ENCODE measurements at regions of chr19 and their contacts with region 1.

Region 1: DNA sequence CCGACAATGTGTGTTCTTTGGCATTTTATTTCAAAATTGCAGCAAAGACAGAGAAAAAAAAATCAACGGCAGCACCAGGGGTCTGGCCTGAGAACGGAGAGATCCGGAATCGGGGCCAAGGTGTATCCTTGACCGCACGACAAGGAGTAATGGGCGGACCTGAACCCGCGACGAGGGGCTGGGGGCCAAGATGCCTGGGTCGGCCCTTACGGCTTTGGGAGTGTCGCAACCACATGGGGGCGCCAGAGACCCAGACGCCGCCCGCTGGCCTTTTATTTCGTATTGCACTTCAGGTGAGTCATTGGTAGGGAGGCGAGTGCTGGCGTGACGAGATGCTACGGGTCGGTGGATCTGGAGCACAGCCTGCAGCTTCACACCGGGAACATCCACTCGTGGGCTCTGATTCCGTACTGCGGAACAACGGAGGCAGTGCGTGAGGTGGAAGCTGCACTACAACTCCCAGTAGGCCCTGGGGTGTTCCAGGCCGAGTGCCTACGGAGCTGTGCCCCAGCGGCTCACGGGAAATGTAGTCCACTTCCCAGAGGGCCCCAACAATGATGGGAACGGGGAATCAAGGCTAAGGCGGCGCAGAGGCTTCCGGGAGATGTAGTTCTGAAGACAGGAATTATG is 15.7 kb downstream of the BCAT2 start:
- DNase-seq: peak; percentile 93
- ATAC-seq: peak; percentile 98
- H3K4me3 ChIP-seq: peak overlapping the region; percentile 42 to 68 (median 60)
- H3K4me3 Mint-ChIP-seq: peak overlapping the region; percentile 98
- H3K27ac ChIP-seq: peak overlapping the region; percentile 30 to 62
- H3K27ac Mint-ChIP-seq: peak overlapping the region; percentile 93
- H3K4me1 ChIP-seq: peaks cover 3 to 10% of the 10 kb centered on the region in 2 donors
- H3K4me1 Mint-ChIP-seq: peaks cover 11% of the 10 kb centered on the region
- H3K27me3 ChIP-seq: no peaks in the 10 kb centered on the region
- H3K27me3 Mint-ChIP-seq: no peaks in the 10 kb centered on the region
- CTCF ChIP-seq: peak; percentile 96

Region 2: DNA sequence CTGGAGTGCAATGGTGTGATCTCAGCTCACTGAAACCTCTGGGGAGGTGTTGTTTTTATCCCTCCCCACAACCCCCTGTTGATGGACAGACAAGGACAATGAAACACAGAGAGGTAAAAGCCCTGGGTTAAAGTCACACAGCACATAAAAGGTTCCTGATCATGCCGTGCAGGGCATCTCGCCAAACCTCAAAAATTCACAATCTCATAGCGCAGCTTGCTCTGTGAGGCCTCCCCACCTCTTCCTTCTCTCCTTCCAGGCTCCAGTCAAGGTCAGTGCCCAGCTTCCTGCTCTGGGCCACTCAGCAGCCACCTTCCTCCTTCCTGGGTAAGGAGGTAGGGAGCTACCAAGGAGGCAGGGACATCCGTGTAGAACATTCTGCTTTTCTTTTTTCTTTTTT is 97.1 kb before region 1 on chr19:
- CTCF ChIA-PET with region 1: no interaction called
- POLR2A ChIA-PET with region 1: no interaction called
- intact Hi-C with region 1: no loop called
- DNase-seq: no peak
- ATAC-seq: no peak
- H3K4me3 ChIP-seq: no peak overlapping the region
- H3K4me3 Mint-ChIP-seq: no peak overlapping the region
- H3K27ac ChIP-seq: no peak overlapping the region
- H3K27ac Mint-ChIP-seq: no peak overlapping the region
- H3K4me1 ChIP-seq: peaks cover 9 to 11% of the 10 kb centered on the region in 2 donors
- H3K4me1 Mint-ChIP-seq: peaks cover 10% of the 10 kb centered on the region
- H3K27me3 ChIP-seq: peaks cover 0 to 26% (median 5%) of the 10 kb centered on the region in 4 experiments
- H3K27me3 Mint-ChIP-seq: peaks cover 14% of the 10 kb centered on the region
- CTCF ChIP-seq: no peak

Region 3: DNA sequence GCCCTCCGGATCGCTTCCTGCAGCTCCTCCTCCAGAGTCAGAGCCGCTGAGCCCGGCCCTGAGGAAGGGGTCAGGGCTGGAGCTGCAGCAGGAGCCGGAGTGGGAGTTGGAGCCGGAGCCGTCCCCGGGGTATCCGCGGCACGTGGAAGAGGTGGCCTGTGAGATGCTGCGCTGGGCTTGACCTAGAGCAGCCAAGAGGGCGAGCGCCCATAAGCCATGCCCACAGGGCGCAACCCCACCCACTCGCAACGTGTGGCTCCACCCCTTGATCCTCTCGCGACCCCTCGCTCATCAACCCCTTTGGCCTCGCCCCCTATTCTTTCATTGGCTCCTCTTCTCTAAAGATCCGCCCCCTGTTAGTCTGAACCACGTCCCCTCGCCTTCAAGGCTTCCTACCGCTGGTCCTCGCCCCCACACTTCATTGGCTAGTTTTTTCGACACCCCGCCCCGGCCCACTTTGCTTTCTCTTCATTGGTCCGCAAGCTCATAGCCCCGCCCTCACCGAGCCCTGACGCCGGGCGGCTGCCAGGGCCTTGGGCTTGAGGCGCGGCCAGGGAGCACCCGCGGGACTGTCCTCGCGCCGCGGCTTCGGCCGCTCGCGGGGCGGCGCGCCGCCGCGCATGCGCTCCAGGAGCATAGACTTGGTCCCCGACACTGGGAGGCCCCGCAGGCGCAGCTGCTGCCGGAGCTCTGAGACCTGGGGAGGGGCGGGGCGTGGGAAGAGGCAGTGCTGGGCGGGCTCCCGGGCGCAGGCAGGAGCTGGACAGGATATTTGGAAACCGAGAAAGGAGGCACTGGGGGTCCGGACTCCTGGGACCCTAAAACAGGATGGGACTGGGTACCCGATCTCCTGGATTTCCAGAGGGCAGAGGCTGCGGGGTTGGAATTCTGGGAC is 81.1 kb before region 1 on chr19:
- CTCF ChIA-PET with region 1: no interaction called
- POLR2A ChIA-PET with region 1: no interaction called
- intact Hi-C with region 1: loop called (anchors 1 kb)
- DNase-seq: peak; percentile 99
- ATAC-seq: peak; percentile 90
- H3K4me3 ChIP-seq: peak overlapping the region; percentile 39 to 86 (median 74)
- H3K4me3 Mint-ChIP-seq: peak overlapping the region; percentile 89
- H3K27ac ChIP-seq: peak overlapping the region; percentile 67 to 76
- H3K27ac Mint-ChIP-seq: peak overlapping the region; percentile 82
- H3K4me1 ChIP-seq: peaks cover 14 to 22% of the 10 kb centered on the region in 2 donors
- H3K4me1 Mint-ChIP-seq: peaks cover 21% of the 10 kb centered on the region
- H3K27me3 ChIP-seq: no peaks in the 10 kb centered on the region
- H3K27me3 Mint-ChIP-seq: no peaks in the 10 kb centered on the region
- CTCF ChIP-seq: no peak

Region 4: GRCh38 chr19:48746738-48747575 is 48.2 kb before region 1 on chr19 and contains the start of gene IZUMO1:
- CTCF ChIA-PET with region 1: no interaction called
- POLR2A ChIA-PET with region 1: no interaction called
- intact Hi-C with region 1: loop called (anchors 1 kb)
- DNase-seq: peak; percentile 64
- ATAC-seq: peak; percentile 72
- H3K4me3 ChIP-seq: peak within 1 kb of the TSS in 2 of 5 experiments; percentile 19 to 20
- H3K4me3 Mint-ChIP-seq: no peak within 1 kb of the TSS
- H3K27ac ChIP-seq: no peak within 1 kb of the TSS
- H3K27ac Mint-ChIP-seq: peak within 1 kb of the TSS; percentile 10
- H3K4me1 ChIP-seq: peaks cover 11 to 14% of the 10 kb centered on the region in 2 donors
- H3K4me1 Mint-ChIP-seq: peaks cover 14% of the 10 kb centered on the region
- H3K27me3 ChIP-seq: peaks cover 0 to 57% (median 19%) of the 10 kb centered on the region in 4 experiments
- H3K27me3 Mint-ChIP-seq: peaks cover 33% of the 10 kb centered on the region
- CTCF ChIP-seq: no peak
- total RNA-seq, gene IZUMO1: not detected in 2 replicates

Region 5: GRCh38 chr19:48770260-48770659 is 24.9 kb before region 1 on chr19:
- CTCF ChIA-PET with region 1: no interaction called
- POLR2A ChIA-PET with region 1: no interaction called
- intact Hi-C with region 1: no loop called
- DNase-seq: no peak
- ATAC-seq: no peak
- H3K4me3 ChIP-seq: no peak overlapping the region
- H3K4me3 Mint-ChIP-seq: no peak overlapping the region
- H3K27ac ChIP-seq: no peak overlapping the region
- H3K27ac Mint-ChIP-seq: no peak overlapping the region
- H3K4me1 ChIP-seq: no peaks in the 10 kb centered on the region
- H3K4me1 Mint-ChIP-seq: no peaks in the 10 kb centered on the region
- H3K27me3 ChIP-seq: peaks cover 0 to 5% (median 0%) of the 10 kb centered on the region in 4 experiments
- H3K27me3 Mint-ChIP-seq: peaks cover 25% of the 10 kb centered on the region
- CTCF ChIP-seq: no peak

Region 6: GRCh38 chr19:48780631-48781391 is 14.4 kb before region 1 on chr19:
- CTCF ChIA-PET with region 1: interaction called, 17 read pairs
- POLR2A ChIA-PET with region 1: interaction called, 8 read pairs
- intact Hi-C with region 1: no loop called
- DNase-seq: no peak
- ATAC-seq: no peak
- H3K4me3 ChIP-seq: no peak overlapping the region
- H3K4me3 Mint-ChIP-seq: no peak overlapping the region
- H3K27ac ChIP-seq: no peak overlapping the region
- H3K27ac Mint-ChIP-seq: peak overlapping the region; percentile 5
- H3K4me1 ChIP-seq: peaks cover 3 to 15% of the 10 kb centered on the region in 2 donors
- H3K4me1 Mint-ChIP-seq: peaks cover 19% of the 10 kb centered on the region
- H3K27me3 ChIP-seq: no peaks in the 10 kb centered on the region
- H3K27me3 Mint-ChIP-seq: no peaks in the 10 kb centered on the region
- CTCF ChIP-seq: no peak

Region 7: GRCh38 chr19:48812094-48812929 is 17.1 kb after region 1 on chr19:
- CTCF ChIA-PET with region 1: interaction called, 85 read pairs
- POLR2A ChIA-PET with region 1: interaction called, 9 read pairs
- intact Hi-C with region 1: loop called (anchors 1 kb)
- DNase-seq: peak; percentile 81
- ATAC-seq: peak; percentile 83
- H3K4me3 ChIP-seq: peak overlapping the region in 4 of 5 experiments; percentile 62 to 88 (median 74)
- H3K4me3 Mint-ChIP-seq: peak overlapping the region; percentile 93
- H3K27ac ChIP-seq: peak overlapping the region; percentile 16 to 22
- H3K27ac Mint-ChIP-seq: peak overlapping the region; percentile 97
- H3K4me1 ChIP-seq: peaks cover 7 to 26% of the 10 kb centered on the region in 2 donors
- H3K4me1 Mint-ChIP-seq: peaks cover 34% of the 10 kb centered on the region
- H3K27me3 ChIP-seq: no peaks in the 10 kb centered on the region
- H3K27me3 Mint-ChIP-seq: no peaks in the 10 kb centered on the region
- CTCF ChIP-seq: no peak

Region 8: DNA sequence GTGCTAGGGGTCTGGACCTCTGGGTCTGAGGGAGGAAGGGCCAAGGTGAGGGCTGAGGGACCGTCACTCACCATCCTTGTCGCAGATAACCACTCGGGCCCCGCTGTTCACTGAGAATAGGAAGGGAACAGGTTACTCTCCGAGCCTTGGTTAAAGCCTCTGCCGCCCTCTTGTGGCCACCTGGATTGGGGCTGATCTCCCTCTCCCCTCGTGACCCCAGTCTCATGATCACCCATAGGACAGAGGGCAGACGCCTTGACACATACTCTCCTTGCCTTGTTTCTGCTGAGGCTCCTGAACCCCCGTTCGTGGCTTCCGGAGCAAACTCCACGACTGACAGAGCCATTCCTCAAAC is 40.5 kb after region 1 on chr19:
- CTCF ChIA-PET with region 1: interaction called, 553 read pairs
- POLR2A ChIA-PET with region 1: interaction called, 8 read pairs
- intact Hi-C with region 1: loop called (anchors 1 kb)
- DNase-seq: peak; percentile 96
- ATAC-seq: peak; percentile 87
- H3K4me3 ChIP-seq: peak overlapping the region in 4 of 5 experiments; percentile 25 to 59 (median 54)
- H3K4me3 Mint-ChIP-seq: peak overlapping the region; percentile 98
- H3K27ac ChIP-seq: peak overlapping the region in 1 of 2 donors; percentile 56
- H3K27ac Mint-ChIP-seq: peak overlapping the region; percentile 93
- H3K4me1 ChIP-seq: peaks cover 16 to 25% of the 10 kb centered on the region in 2 donors
- H3K4me1 Mint-ChIP-seq: peaks cover 25% of the 10 kb centered on the region
- H3K27me3 ChIP-seq: peaks cover 0 to 13% (median 1%) of the 10 kb centered on the region in 4 experiments
- H3K27me3 Mint-ChIP-seq: no peaks in the 10 kb centered on the region
- CTCF ChIP-seq: peak; percentile 82

Region 9: GRCh38 chr19:48842789-48843162 is 47.6 kb after region 1 on chr19:
- CTCF ChIA-PET with region 1: interaction called, 553 read pairs
- POLR2A ChIA-PET with region 1: interaction called, 8 read pairs
- intact Hi-C with region 1: loop called (anchors 1 kb)
- DNase-seq: peak; percentile 79
- ATAC-seq: peak; percentile 71
- H3K4me3 ChIP-seq: no peak overlapping the region
- H3K4me3 Mint-ChIP-seq: no peak overlapping the region
- H3K27ac ChIP-seq: no peak overlapping the region
- H3K27ac Mint-ChIP-seq: no peak overlapping the region
- H3K4me1 ChIP-seq: no peaks in the 10 kb centered on the region
- H3K4me1 Mint-ChIP-seq: peaks cover 3% of the 10 kb centered on the region
- H3K27me3 ChIP-seq: no peaks in the 10 kb centered on the region
- H3K27me3 Mint-ChIP-seq: no peaks in the 10 kb centered on the region
- CTCF ChIP-seq: peak; percentile 82

Region 10: DNA sequence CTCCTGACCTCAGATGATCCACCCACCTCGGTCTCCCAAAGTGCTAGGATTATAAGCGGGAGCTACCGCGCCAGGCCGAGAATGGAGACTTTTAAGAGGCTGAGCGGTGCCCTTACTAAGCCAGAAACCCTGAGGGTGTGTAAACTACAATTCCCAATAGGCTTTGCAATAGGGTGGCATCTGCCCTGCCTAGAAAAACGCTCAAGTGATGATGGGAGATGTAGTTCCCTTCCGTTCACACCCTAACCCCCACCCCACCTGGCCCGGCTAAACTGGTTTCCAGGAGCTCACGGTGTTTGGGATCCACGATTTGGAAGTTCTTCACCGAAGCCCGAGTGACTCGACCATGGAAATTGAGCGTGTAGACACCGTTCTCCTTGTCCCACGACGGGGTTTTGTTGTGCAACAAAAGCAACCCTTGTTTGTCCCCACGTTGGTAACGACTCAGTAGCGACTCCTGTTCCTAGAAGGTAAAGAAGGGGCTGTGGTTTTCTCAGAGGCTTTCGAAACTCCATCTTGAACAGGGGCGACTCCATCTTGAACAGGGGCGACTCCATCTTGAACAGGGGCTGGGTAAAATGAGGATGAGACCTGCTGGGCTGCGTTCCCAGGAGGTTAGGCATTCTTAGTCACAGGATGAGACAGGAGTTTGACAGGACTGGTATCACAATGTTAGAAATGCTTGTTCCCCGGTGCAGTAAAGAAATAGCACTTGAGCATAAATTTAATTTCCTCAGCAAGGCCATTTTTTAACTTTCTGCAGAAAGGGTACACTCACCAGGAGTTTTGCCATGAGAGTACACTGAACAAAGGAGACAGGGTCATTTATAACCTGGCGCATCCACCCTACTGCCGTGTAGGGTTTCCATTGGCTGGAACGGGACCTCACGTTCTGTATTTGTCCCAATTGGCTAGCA is 86.8 kb after region 1 on chr19:
- CTCF ChIA-PET with region 1: no interaction called
- POLR2A ChIA-PET with region 1: no interaction called
- intact Hi-C with region 1: no loop called
- DNase-seq: peak; percentile 61
- ATAC-seq: peak; percentile 54
- H3K4me3 ChIP-seq: no peak overlapping the region
- H3K4me3 Mint-ChIP-seq: no peak overlapping the region
- H3K27ac ChIP-seq: no peak overlapping the region
- H3K27ac Mint-ChIP-seq: no peak overlapping the region
- H3K4me1 ChIP-seq: peaks cover 0 to 18% of the 10 kb centered on the region in 2 donors
- H3K4me1 Mint-ChIP-seq: peaks cover 17% of the 10 kb centered on the region
- H3K27me3 ChIP-seq: no peaks in the 10 kb centered on the region
- H3K27me3 Mint-ChIP-seq: no peaks in the 10 kb centered on the region
- CTCF ChIP-seq: no peak

Measured in B cell (primary cell).